ENCODE measurements at regions of chr2 and their contacts with region 1.

Region 1: GRCh38 chr2:7044261-7045250 is 127.3 kb downstream of the RNF144A start:
- DNase-seq: peak in 1 of 2 donors; percentile 65
- ATAC-seq: peak; percentile 78 to 83
- H3K4me3 ChIP-seq: no peak overlapping the region
- H3K27ac ChIP-seq: no peak overlapping the region
- H3K4me1 ChIP-seq: peaks cover 0 to 4% of the 10 kb centered on the region in 2 donors
- H3K27me3 ChIP-seq: no peaks in the 10 kb centered on the region
- CTCF ChIP-seq: peak; percentile 83 to 95 (median 89)
- POLR2A ChIP-seq: no peak

Region 2: GRCh38 chr2:6826081-6826913 is 218.3 kb before region 1 on chr2:
- in situ Hi-C with region 1: no loop called
- intact Hi-C with region 1: loop called (anchors 1 kb)
- DNase-seq: no peak
- ATAC-seq: peak in 1 of 2 donors; percentile 85
- H3K4me3 ChIP-seq: no peak overlapping the region
- H3K27ac ChIP-seq: no peak overlapping the region
- H3K4me1 ChIP-seq: peaks cover 0 to 6% of the 10 kb centered on the region in 2 donors
- H3K27me3 ChIP-seq: no peaks in the 10 kb centered on the region
- CTCF ChIP-seq: peak in 4 of 5 experiments; percentile 38 to 60 (median 51)
- POLR2A ChIP-seq: no peak

Region 3: DNA sequence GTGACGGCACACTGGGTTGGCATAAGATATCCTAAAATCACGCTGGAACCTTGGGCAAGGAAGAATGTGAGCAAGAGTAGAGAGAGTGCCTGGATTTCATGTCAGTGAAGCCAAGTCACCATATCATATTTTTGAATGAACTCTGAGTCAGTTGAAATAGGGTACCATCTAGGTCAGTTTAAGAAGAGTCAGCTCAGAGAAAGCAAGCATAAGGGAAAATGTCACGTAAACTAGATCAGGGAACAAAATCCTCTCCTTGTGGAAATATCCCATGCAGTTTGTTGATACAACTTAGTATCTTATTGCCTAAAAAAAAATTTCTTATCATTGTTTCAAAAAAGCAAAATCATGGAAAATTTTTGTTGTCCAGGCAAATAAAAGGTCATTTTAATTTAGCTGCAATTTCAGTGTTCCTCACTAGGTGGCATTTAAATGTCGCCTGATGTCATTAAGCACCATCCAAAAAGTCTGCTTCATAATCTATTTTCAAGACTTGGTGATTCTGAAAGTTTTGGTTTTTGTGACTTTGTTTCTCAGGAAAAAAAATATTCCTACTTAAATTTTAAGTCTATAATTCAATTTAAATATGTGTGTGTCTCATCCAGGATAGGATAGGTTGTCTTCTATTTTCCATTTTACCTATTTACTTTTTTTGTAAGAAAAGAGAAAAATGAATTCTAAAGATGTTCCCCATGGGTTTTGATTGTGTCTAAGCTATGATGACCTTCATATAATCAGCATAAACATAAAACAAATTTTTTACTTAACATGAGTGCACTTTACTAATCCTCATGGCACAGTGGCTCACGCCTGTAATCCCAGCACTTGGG is 147.4 kb before region 1 on chr2:
- in situ Hi-C with region 1: loop called in 3 of 4 experiments (anchors 5 to 10 kb)
- intact Hi-C with region 1: loop called (anchors 1 kb)
- DNase-seq: no peak
- ATAC-seq: peak; percentile 66
- H3K4me3 ChIP-seq: no peak overlapping the region
- H3K27ac ChIP-seq: no peak overlapping the region
- H3K4me1 ChIP-seq: no peaks in the 10 kb centered on the region
- H3K27me3 ChIP-seq: no peaks in the 10 kb centered on the region
- CTCF ChIP-seq: peak; percentile 56 to 81 (median 68)
- POLR2A ChIP-seq: no peak

Region 4: GRCh38 chr2:6909431-6910385 is 134.8 kb before region 1 on chr2:
- in situ Hi-C with region 1: loop called in 3 of 4 experiments (anchors 5 to 10 kb)
- intact Hi-C with region 1: no loop called
- DNase-seq: no peak
- ATAC-seq: no peak
- H3K4me3 ChIP-seq: no peak overlapping the region
- H3K27ac ChIP-seq: no peak overlapping the region
- H3K4me1 ChIP-seq: no peaks in the 10 kb centered on the region
- H3K27me3 ChIP-seq: no peaks in the 10 kb centered on the region
- CTCF ChIP-seq: no peak
- POLR2A ChIP-seq: no peak

Region 5: DNA sequence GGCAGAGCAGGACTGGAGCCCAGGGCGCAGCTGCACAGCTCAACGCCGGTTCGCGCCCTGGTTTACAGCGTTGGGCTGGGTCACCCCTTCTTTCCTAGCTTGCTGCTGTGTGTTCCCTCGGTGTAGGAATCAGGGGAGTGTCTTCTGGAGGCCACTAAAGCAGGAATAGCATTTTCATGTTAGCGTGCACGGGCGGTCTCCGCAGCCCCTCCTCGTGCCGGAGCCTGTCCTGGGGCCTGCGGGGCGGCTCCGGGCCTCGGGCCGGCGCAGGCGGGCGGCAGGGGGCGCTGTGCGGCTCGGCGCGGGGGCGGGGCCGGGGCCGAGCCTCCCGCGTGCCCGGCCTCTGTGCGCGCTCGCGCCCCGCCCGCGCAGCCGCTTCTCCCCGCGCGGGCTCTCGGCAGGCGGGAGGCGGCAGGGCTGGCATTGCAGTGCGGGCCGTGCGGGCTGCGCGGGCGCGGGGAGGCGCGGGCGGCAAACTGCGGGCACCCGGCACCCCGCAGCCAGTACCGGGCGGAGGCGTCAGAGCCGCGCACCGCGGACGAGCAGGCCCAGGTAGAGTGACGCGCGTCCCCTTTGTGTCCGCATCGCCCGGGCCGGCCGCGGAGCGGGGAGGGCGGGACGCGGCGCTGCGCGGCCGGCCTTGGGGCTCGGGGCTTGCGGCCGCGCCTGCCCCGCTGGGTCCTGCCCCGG is 127.3 kb before region 1 on chr2 and contains the start of gene RNF144A:
- in situ Hi-C with region 1: no loop called
- intact Hi-C with region 1: loop called (anchors 5 kb)
- DNase-seq: no peak
- ATAC-seq: peak; percentile 90 to 91
- H3K4me3 ChIP-seq: peak within 1 kb of the TSS; percentile 62 to 82 (median 70)
- H3K27ac ChIP-seq: peak within 1 kb of the TSS; percentile 54 to 76 (median 65)
- H3K4me1 ChIP-seq: peaks cover 6 to 10% of the 10 kb centered on the region in 2 donors
- H3K27me3 ChIP-seq: no peaks in the 10 kb centered on the region
- CTCF ChIP-seq: peak; percentile 40 to 67 (median 65)
- POLR2A ChIP-seq: peak; percentile 63 to 69
- total RNA-seq, gene RNF144A: 4.9 to 16.2 (median 10.2) TPM

Region 6: GRCh38 chr2:6999211-6999877 is 45.2 kb before region 1 on chr2:
- in situ Hi-C with region 1: no loop called
- intact Hi-C with region 1: no loop called
- DNase-seq: no peak
- ATAC-seq: no peak
- H3K4me3 ChIP-seq: no peak overlapping the region
- H3K27ac ChIP-seq: no peak overlapping the region
- H3K4me1 ChIP-seq: peaks cover 7 to 14% of the 10 kb centered on the region in 2 donors
- H3K27me3 ChIP-seq: no peaks in the 10 kb centered on the region
- CTCF ChIP-seq: no peak
- POLR2A ChIP-seq: no peak

Measured in gastrocnemius medialis (tissue), 4 donors.